Head of caudate nucleus (tissue), 42 donors: ENCODE measurements at regions of chr1 and their contacts with region 1.

Region 1: GRCh38 chr1:27603681-27604578 is at the start of gene AHDC1:
- DNase-seq: peak; percentile 67 to 97 (median 92)

Region 2: DNA sequence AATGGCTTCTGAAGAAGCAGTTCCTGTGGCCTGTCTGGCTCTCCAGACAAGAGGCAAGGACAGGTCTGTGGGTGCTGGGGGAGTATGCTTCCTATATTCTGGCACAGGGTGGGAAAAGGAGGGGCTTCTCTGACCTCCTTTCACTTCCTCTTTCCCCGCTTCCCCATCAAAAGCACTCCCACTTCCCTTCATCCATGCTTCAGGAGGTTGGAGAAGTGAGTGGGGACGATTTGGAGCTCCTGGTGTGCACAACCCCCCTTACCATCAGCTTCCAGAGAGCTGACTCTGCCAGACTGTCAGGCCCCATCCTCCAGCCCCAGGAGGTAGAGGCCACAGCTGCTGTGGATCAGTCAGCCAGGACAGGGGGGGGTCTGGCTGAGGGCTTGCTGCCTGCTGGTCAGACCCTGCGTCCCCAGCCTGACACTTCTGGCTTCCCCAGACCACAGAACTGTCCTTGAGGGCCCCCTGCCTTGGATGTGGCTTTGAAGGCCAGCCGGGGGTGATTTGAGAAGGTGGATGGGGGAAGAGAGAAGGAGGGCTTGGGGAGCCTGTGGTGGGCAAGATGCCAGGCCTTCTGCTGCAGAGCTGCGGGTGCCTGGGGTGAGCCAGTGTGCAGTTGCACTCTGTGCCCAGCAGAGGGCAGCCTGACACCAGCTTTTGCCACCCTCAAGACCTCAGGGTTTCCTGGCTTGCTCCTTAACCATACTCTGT is 303.4 kb before region 1 on chr1:
- intact Hi-C with region 1: loop called (anchors 5 kb)
- DNase-seq: peak; percentile 64 to 93 (median 87)

Region 3: DNA sequence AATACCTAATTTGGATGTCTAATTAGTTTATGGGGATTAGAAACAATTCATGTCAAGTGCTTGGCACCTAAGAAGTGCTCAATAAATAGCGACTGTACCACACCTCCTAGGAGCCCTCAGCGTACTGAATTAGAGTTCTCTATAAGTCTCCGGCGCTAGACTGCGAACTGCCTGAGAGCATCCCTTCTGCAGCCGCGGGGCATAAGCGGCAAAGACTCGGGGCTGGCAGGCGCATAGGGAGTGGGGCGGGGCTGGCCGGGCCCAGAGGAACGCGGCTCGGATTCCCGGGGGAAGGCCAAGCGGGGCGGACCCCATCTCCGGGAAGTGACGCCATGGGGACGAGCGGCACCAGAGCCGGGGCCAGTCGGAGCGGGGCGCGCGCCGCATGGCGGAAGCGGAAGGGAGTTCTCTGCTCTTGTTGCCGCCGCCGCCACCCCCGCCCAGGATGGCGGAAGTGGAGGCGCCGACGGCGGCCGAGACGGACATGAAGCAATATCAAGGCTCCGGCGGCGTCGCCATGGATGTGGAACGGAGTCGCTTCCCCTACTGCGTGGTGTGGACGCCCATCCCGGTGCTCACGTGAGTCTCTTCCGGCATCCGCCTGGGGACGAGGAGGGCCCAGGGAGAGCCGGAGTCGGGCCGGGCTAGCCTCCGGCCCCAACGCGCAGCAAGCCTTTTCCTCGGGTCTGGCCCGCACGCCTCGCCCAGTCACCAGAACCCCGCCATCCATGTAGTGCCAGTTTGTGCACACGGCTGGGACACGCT is 281.9 kb before region 1 on chr1 and contains the start of gene TMEM222:
- intact Hi-C with region 1: loop called (anchors 10 kb)
- DNase-seq: peak; percentile 94 to 100 (median 99)

Region 4: DNA sequence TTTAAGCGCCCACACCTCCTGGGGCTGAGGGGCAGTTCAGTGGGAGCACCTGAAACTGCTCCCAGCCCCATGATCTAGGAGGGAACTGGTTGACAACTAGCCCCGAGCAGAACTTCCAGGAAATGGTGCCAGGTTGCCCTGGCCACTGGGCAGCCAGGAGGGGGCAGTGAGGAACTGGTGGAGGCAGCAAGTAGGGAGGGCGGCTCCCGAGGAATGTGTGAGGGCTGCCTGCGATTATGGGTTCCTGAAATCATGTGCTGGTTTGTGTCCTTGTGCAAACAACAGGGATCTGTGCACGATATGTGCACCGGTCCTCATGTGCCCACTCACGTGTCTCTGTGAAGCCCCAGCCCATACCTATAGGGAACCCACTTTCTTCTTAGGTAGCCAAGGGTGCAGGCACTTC is 201.6 kb before region 1 on chr1:
- intact Hi-C with region 1: loop called (anchors 5 kb)
- DNase-seq: peak; percentile 42 to 84 (median 71)

Region 5: GRCh38 chr1:27416387-27417111 is 187.4 kb before region 1 on chr1:
- intact Hi-C with region 1: loop called (anchors 5 kb)
- DNase-seq: peak in 13 of 42 donors; percentile 35 to 78 (median 59)

Region 6: GRCh38 chr1:27489910-27490741 is 113.8 kb before region 1 on chr1 and contains the start of gene WASF2:
- intact Hi-C with region 1: loop called (anchors 5 kb)
- DNase-seq: peak; percentile 95 to 99 (median 98)

Region 7: GRCh38 chr1:27513958-27514357 is 90.0 kb before region 1 on chr1:
- intact Hi-C with region 1: no loop called
- DNase-seq: peak in 7 of 42 donors; percentile 26 to 61 (median 48)

Region 8: DNA sequence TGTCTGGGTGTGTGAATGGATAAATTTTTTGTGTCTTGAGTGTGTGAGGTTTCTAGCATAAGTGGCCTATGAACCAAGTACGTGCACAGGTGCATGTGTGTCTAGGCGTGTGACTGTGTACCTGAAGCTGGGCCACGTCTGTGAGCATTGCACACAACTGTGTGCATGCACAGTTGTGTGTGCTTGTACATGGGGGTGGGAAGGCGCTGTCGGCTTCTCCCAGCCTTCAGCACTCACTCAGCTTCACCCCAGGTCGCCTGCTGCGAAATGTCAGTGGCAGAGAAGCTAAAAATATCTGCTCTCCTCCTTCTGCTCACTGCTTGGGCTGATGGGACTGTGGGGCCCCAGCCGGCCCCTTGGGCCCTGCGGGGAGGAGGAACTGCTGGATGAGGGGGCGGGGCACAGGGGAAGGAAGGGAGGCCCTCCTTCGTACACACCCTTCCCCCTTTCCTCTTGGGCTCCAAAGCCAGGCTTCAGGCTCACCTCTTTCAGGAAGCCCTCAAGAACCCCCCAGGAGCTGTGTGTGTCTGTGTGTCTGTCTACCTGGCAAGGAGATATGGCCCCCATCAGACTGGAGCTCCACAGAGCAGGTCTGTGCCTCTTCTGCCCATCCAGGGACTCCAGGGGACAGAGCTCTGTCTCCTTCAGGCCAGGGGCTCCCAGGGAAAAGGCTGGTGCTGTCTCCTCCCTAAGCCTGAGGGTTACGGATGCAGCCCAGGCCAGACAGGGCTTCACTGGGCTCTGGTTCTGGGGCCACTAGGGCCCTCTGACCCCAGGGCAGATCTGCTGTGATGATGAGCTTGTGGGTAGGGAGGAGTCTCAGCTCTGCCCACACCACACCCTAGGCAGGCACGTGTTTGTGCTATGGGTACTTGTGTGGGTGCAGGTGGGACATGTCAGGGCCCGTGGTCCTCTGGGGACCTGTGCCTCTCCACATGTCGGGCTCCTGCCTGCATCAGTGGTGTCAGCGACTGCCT is 78.3 kb before region 1 on chr1:
- intact Hi-C with region 1: no loop called
- DNase-seq: peak in 36 of 42 donors; percentile 29 to 82 (median 62)

Region 9: DNA sequence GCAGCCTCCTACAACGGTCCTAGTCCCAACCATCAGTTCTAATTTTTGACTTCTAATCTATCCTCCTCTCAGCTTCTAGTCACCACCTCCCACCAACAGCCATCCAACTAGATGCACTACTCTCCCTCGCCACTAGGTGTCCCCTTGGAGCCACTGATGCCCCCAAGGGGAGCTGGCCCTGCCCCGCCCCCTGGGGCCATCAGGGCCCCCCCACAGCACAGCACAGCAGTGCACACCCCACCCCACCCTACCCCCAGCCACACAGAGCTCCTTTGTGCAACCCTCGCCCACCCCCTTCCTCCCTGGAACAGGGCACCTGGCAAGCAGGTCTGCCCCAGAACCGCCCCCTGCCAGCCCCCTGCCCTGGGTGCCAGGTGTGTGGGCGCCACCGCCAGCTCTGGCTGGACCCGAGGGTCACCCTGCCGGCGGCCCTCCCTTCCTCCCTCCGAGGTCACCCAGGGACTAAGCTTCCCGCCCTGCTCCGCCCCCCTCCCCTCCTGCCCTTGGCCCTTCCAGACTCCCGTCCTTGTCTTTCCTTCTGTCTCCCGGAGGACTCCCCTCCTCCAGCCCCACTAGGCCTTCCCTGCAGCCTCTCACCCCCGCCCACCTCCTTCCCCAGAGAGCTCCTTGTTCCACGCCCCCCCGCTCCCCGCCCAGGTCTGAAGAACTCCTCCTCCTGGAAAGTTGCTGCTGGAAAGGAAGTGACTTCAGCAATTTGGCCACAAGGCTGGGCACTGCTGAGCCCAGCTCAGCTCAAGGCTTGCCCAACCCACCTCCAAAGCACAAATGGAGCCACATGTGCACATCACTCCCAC is 46.9 kb before region 1 on chr1:
- intact Hi-C with region 1: loop called (anchors 2 kb)
- DNase-seq: peak; percentile 67 to 94 (median 82)